Activated B cell treated with CpG ODN at 0.5 μM for 24 hours (primary cell): ENCODE measurements at regions of chr15 and their contacts with region 1.

Region 1: DNA sequence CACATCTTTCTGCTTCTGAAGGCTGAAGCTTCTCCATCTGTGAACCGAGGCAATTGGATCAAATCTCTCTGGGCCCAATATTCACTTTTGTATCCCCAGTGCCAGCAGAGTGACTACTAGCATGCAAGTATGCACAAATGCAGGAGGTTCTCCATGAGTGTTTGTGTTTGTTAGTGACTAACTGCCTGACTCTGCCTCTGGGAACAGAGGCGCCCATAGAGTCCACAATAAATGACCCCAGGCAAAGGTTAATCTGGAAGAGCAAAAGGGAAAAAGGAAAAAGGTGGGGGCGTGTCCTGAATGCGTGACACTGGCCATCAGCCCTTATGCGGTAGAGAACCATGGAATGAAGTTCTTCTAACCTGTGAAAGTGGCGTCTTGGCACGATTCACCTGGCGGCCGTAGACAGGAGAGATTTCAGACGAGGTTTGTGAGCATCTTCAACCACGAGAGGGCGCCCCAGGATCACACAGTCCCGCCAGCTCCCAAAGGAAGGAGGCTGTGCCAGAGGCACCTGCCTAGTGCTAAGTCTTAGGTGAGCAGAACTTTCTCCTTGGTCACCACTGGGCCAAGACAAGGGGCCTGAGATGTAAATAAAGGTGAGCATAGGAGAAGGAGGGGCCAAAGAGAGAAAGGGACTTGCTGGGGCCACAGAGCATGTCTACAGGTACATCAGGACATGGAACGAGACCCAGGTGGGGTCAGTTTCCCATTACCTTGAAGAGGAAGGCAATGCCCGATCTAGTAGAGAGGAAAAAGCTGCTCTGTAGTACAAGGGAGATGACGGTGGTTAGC is 44.2 kb downstream of the RBPMS2 start:
- DNase-seq: peak; percentile 77
- ATAC-seq: peak; percentile 74
- H3K4me3 Mint-ChIP-seq: no peak overlapping the region
- H3K27ac Mint-ChIP-seq: no peak overlapping the region
- H3K4me1 Mint-ChIP-seq: peaks cover 7% of the 10 kb centered on the region
- H3K27me3 Mint-ChIP-seq: no peaks in the 10 kb centered on the region
- CTCF ChIP-seq: peak; percentile 61

Region 2: DNA sequence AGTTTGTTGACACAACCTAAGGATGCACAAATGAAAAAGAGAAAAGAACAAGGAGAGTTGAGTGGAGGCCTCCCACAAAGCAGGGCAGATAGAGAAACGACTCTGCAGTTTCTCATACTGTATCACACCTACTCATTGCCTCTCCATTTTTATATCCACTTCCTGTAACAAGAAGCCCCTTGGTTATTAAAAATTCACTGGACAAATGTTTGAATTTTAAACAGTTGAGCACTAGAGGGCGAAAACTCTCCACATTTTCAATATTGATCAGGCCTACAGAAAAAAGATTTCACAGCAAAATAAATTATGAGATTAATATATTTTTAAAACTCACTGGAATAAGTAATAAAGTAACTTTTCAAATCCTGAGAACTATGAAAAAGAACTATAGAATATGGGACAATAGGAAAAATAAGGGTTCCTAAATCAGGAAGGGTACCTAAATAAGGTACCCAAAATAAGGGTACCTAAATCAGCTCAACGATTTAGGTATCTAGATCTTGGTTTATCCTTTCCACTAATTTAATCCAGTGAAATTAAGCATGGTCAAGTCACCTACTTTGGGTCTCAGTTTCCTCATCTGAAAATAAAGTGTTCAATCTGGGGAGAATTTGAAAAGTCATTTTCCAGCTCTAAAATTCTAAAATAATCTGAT is 521.4 kb before region 1 on chr15:
- CTCF ChIA-PET with region 1: interaction called, 5 read pairs
- POLR2A ChIA-PET with region 1: no interaction called
- intact Hi-C with region 1: loop called (anchors 1 kb)
- DNase-seq: no peak
- ATAC-seq: peak; percentile 10
- H3K4me3 Mint-ChIP-seq: no peak overlapping the region
- H3K27ac Mint-ChIP-seq: no peak overlapping the region
- H3K4me1 Mint-ChIP-seq: no peaks in the 10 kb centered on the region
- H3K27me3 Mint-ChIP-seq: no peaks in the 10 kb centered on the region
- CTCF ChIP-seq: no peak

Region 3: GRCh38 chr15:64681424-64682024 is 49.7 kb before region 1 on chr15:
- CTCF ChIA-PET with region 1: interaction called, 243 read pairs
- POLR2A ChIA-PET with region 1: interaction called, 7 read pairs
- intact Hi-C with region 1: loop called (anchors 1 kb)
- DNase-seq: no peak
- ATAC-seq: peak; percentile 28
- H3K4me3 Mint-ChIP-seq: no peak overlapping the region
- H3K27ac Mint-ChIP-seq: no peak overlapping the region
- H3K4me1 Mint-ChIP-seq: no peaks in the 10 kb centered on the region
- H3K27me3 Mint-ChIP-seq: no peaks in the 10 kb centered on the region
- CTCF ChIP-seq: no peak

Region 4: GRCh38 chr15:64695561-64695992 is 35.6 kb before region 1 on chr15:
- CTCF ChIA-PET with region 1: interaction called, 243 read pairs
- POLR2A ChIA-PET with region 1: interaction called, 3 read pairs
- intact Hi-C with region 1: no loop called
- DNase-seq: peak; percentile 23
- ATAC-seq: peak; percentile 93
- H3K4me3 Mint-ChIP-seq: peak overlapping the region; percentile 40
- H3K27ac Mint-ChIP-seq: peak overlapping the region; percentile 83
- H3K4me1 Mint-ChIP-seq: peaks cover 73% of the 10 kb centered on the region
- H3K27me3 Mint-ChIP-seq: no peaks in the 10 kb centered on the region
- CTCF ChIP-seq: no peak

Region 5: GRCh38 chr15:64836023-64836536 is 104.9 kb after region 1 on chr15:
- CTCF ChIA-PET with region 1: interaction called, 6 read pairs
- POLR2A ChIA-PET with region 1: interaction called, 3 read pairs
- intact Hi-C with region 1: loop called (anchors 1 kb)
- DNase-seq: no peak
- ATAC-seq: no peak
- H3K4me3 Mint-ChIP-seq: peak overlapping the region; percentile 60
- H3K27ac Mint-ChIP-seq: peak overlapping the region; percentile 50
- H3K4me1 Mint-ChIP-seq: peaks cover 23% of the 10 kb centered on the region
- H3K27me3 Mint-ChIP-seq: no peaks in the 10 kb centered on the region
- CTCF ChIP-seq: no peak

Region 6: GRCh38 chr15:64905119-64905831 is 174.1 kb after region 1 on chr15:
- CTCF ChIA-PET with region 1: interaction called, 55 read pairs
- POLR2A ChIA-PET with region 1: interaction called, 3 read pairs
- intact Hi-C with region 1: loop called (anchors 1 kb)
- DNase-seq: peak; percentile 78
- ATAC-seq: peak; percentile 98
- H3K4me3 Mint-ChIP-seq: peak overlapping the region; percentile 82
- H3K27ac Mint-ChIP-seq: peak overlapping the region; percentile 66
- H3K4me1 Mint-ChIP-seq: peaks cover 41% of the 10 kb centered on the region
- H3K27me3 Mint-ChIP-seq: peaks cover 2% of the 10 kb centered on the region
- CTCF ChIP-seq: peak; percentile 59

Region 7: DNA sequence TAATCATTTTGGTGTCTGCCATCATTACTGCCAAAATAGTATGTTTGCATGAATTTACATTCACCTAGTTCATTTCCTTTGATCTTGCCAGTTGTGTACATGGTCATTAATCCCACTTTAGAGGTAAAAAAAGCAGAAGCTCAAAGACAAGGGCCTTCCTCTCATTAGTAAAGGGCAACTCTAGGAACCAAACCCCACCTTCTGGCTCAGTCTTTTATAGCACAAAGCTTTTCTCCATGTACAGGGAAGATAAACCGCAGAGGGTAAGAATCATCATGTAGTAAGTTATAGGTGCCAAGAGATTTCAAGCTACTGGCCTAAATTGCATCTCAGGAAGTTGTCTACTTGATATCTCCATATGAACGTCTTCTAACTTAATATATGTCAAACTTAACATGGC is 277.8 kb after region 1 on chr15:
- CTCF ChIA-PET with region 1: interaction called, 5 read pairs
- POLR2A ChIA-PET with region 1: no interaction called
- intact Hi-C with region 1: loop called (anchors 1 kb)
- DNase-seq: no peak
- ATAC-seq: peak; percentile 60
- H3K4me3 Mint-ChIP-seq: no peak overlapping the region
- H3K27ac Mint-ChIP-seq: no peak overlapping the region
- H3K4me1 Mint-ChIP-seq: peaks cover 6% of the 10 kb centered on the region
- H3K27me3 Mint-ChIP-seq: no peaks in the 10 kb centered on the region
- CTCF ChIP-seq: no peak

Region 8: DNA sequence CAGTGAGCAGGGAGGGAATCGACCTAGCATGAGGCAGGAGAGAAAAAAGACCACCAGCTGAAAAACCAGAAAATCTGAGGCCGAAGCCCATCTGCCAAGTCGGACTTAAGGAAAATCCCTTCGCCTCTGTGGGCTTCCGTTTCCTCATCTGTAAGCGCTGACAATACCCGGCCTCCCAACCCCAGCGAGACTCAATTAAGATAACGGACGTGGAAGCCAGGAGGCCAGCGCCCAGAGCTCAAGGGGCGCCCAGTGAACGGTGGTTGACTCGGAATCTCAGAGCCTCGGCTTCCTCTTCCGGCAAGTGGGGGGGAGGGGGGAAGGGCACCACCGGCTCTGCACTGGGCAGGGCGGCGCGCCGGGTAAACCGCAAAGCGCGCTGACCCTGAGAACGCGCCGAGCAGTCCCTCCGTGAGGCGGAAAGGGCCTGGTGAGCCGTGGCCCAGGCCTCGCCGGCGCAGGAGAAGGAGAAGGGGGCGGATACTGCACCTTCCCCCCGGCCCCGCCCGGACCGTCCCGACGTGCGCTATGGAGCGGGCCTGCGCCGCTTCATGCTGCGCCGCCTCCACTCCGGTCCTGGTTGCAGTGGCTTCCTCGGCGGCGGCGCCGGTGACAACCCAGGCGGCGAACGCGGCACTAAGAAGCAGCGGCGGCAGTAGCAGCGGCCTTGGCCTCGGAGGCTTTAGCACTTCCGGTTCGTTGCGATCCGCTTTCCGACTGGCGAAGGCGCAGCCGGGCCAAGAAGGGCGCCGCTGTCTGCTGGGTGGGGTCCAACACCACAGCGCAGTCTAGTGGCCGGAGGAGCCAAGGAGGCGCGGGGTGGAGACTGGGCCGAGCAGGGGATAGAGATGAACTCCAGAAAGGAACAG is 786.0 kb after region 1 on chr15 and contains the start of gene DPP8:
- CTCF ChIA-PET with region 1: no interaction called
- POLR2A ChIA-PET with region 1: no interaction called
- intact Hi-C with region 1: no loop called
- DNase-seq: peak; percentile 91
- ATAC-seq: peak; percentile 94
- H3K4me3 Mint-ChIP-seq: peak within 1 kb of the TSS; percentile 96
- H3K27ac Mint-ChIP-seq: peak within 1 kb of the TSS; percentile 89
- H3K4me1 Mint-ChIP-seq: peaks cover 37% of the 10 kb centered on the region
- H3K27me3 Mint-ChIP-seq: no peaks in the 10 kb centered on the region
- CTCF ChIP-seq: no peak
- total RNA-seq, gene DPP8: 43.0 and 52.2 TPM in 2 replicates